OCI-LY7 (cell line): ENCODE measurements at regions of chr5 and their contacts with region 1.

Region 1: DNA sequence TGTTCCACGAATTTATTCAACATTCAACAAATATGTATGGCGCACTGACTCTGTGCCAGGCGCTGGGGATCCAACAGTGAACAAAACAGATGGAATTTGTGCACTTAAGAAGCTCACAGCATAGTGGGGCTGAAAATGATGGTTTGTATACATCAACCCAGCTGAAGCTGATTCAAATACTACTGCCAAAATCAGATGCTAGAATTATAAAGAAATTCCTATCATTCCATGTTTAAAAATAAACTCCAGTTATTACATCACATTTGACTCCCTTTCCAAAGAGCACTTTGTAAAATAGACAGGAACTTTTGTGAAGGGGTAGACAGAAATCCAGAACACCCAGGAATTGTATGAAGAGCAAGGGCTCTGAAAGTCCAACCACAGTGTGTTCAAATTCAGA is 54.1 kb downstream of the ZNF608 start:
- DNase-seq: no peak
- H3K4me3 ChIP-seq: no peak overlapping the region
- H3K27ac ChIP-seq: no peak overlapping the region
- H3K4me1 ChIP-seq: peaks cover 15% of the 10 kb centered on the region
- CTCF ChIP-seq: no peak

Region 2: GRCh38 chr5:124677374-124678351 is 14.7 kb before region 1 on chr5:
- CTCF ChIA-PET with region 1: no interaction called
- POLR2A ChIA-PET with region 1: interaction called, 12 read pairs
- intact Hi-C with region 1: no loop called
- DNase-seq: no peak
- H3K4me3 ChIP-seq: no peak overlapping the region
- H3K27ac ChIP-seq: no peak overlapping the region
- H3K4me1 ChIP-seq: peaks cover 4% of the 10 kb centered on the region
- CTCF ChIP-seq: no peak